Left cardiac atrium (tissue), 4 donors: ENCODE measurements at regions of chr12 and their contacts with region 1.

Region 1: DNA sequence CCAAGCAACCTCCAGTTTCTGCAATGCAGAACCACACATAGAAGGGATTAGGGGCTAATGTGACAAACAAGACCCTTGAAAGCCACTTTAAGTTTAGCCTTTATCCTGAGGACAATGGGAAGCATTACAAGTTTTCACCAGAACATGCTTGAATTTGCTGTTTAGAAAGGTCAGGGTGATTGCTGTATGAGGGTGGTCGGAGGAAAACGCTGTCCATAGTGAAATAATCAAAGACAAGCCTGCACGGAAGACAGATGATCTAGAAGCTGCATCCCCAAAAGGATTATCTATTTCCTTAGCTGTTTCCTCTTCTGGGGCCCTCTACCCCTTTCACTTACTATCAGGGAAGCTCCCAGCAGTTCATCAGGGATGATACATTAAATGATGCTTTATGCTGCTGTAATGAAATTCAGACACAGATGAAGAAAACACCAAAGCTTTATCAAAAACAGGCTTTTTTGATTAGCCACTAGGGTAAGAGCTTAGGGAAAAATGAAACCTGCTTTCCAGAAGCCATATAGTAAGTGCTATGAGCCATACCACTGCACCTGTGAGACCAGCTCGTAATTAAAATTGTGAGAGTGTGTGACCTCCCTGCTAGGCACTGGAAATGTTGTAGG is 6.5 kb downstream of the HAL start:
- DNase-seq: no peak
- ATAC-seq: no peak

Region 2: GRCh38 chr12:95829395-95829794 is 160.2 kb before region 1 on chr12:
- intact Hi-C with region 1: loop called in 1 of 2 experiments (anchors 5 kb)
- DNase-seq: no peak
- ATAC-seq: no peak

Region 3: GRCh38 chr12:95922231-95922630 is 67.4 kb before region 1 on chr12:
- intact Hi-C with region 1: no loop called
- DNase-seq: no peak
- ATAC-seq: no peak